ENCODE measurements at regions of chr7 and their contacts with region 1.

Region 1: DNA sequence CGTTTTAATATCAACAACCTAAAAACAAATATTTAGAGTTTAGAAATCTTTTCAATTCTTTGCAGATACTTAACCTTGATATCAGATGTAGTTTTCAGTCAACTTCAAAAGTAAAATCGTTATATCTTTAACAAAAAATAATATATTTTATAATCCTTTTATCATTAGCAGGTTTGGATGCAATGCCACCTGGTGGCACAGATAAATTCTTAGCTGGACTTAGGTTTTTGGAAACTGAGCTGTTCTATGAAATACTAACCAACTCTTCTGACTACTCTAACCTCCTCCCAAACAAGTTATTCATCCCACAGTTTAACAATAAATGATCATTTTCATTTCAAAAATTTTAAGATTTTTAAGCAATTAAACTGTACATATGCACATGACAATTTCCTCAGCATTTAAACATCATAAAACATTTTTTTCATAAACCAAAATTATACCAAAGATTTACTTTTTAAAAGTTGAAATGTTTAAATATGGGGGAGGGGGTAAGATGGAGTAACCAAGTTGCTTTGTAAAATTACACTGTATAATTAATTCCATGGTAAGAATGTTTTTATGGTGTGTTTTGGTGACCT is 56.9 kb downstream of the HIBADH start:
- DNase-seq: peak; percentile 22 to 55
- ATAC-seq: peak in 1 of 2 experiments; percentile 83; a peak in 4 of 6 replicates
- H3K4me3 ChIP-seq: peak overlapping the region; percentile 44
- H3K27ac ChIP-seq: peak overlapping the region; percentile 53 to 79
- H3K4me1 ChIP-seq: peaks cover 68% of the 10 kb centered on the region
- CTCF ChIP-seq: peak; percentile 84
- EP300 ChIP-seq: no peak
- POLR2A ChIP-seq: no peak
- RAD21 ChIP-seq: peak; percentile 54 to 73

Region 2: GRCh38 chr7:27586825-27587224 is 19.0 kb before region 1 on chr7:
- CTCF ChIA-PET with region 1: interaction called, 13 read pairs
- POLR2A ChIA-PET with region 1: no interaction called
- DNase-seq: no peak
- ATAC-seq: peak; percentile 21 to 50; a peak in 4 of 6 replicates
- H3K4me3 ChIP-seq: no peak overlapping the region
- H3K27ac ChIP-seq: no peak overlapping the region
- H3K4me1 ChIP-seq: no peaks in the 10 kb centered on the region
- CTCF ChIP-seq: no peak
- EP300 ChIP-seq: no peak
- POLR2A ChIP-seq: no peak
- RAD21 ChIP-seq: no peak

Region 3: GRCh38 chr7:27617651-27618381 is 12.0 kb after region 1 on chr7:
- CTCF ChIA-PET with region 1: interaction called, 10 read pairs
- POLR2A ChIA-PET with region 1: no interaction called
- DNase-seq: no peak
- ATAC-seq: no peak
- H3K4me3 ChIP-seq: no peak overlapping the region
- H3K27ac ChIP-seq: no peak overlapping the region
- H3K4me1 ChIP-seq: no peaks in the 10 kb centered on the region
- CTCF ChIP-seq: no peak
- EP300 ChIP-seq: no peak
- POLR2A ChIP-seq: no peak
- RAD21 ChIP-seq: no peak

Region 4: DNA sequence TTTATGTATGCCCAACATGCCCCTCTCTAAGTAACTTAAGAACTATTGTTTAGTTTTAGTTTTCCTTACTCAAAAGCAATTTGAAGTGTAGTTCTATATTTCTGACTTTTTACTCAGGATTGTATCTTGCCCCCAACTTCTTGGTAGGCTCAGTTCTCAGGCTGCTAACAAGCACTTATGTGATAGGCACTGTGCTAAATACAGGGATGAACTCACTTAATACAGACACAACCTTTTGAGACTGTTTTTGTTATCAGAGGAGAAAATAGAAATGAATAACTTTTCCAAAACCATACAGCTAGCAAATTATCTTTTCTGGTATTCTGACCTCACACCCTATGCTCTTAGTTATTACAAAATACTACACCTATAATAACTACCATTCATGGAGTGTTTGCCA is 150.5 kb after region 1 on chr7:
- CTCF ChIA-PET with region 1: no interaction called
- POLR2A ChIA-PET with region 1: no interaction called
- DNase-seq: no peak
- ATAC-seq: no peak
- H3K4me3 ChIP-seq: no peak overlapping the region
- H3K27ac ChIP-seq: no peak overlapping the region
- H3K4me1 ChIP-seq: peaks cover 46% of the 10 kb centered on the region
- CTCF ChIP-seq: no peak
- EP300 ChIP-seq: no peak
- POLR2A ChIP-seq: no peak
- RAD21 ChIP-seq: no peak

Region 5: GRCh38 chr7:27952456-27953285 is 346.9 kb after region 1 on chr7:
- CTCF ChIA-PET with region 1: no interaction called
- POLR2A ChIA-PET with region 1: no interaction called
- DNase-seq: no peak
- ATAC-seq: no peak
- H3K4me3 ChIP-seq: no peak overlapping the region
- H3K27ac ChIP-seq: no peak overlapping the region
- H3K4me1 ChIP-seq: no peaks in the 10 kb centered on the region
- CTCF ChIP-seq: no peak
- EP300 ChIP-seq: no peak
- POLR2A ChIP-seq: no peak
- RAD21 ChIP-seq: no peak

Region 6: GRCh38 chr7:28458732-28459131 is 853.0 kb after region 1 on chr7:
- CTCF ChIA-PET with region 1: no interaction called
- POLR2A ChIA-PET with region 1: no interaction called
- DNase-seq: peak in 1 of 2 experiments; percentile 4
- ATAC-seq: peak; percentile 34 to 52; a peak in 3 of 6 replicates
- H3K4me3 ChIP-seq: no peak overlapping the region
- H3K27ac ChIP-seq: no peak overlapping the region
- H3K4me1 ChIP-seq: no peaks in the 10 kb centered on the region
- CTCF ChIP-seq: no peak
- EP300 ChIP-seq: no peak
- POLR2A ChIP-seq: no peak
- RAD21 ChIP-seq: no peak